PC-3 (cell line): ENCODE measurements at regions of chr18 and their contacts with region 1.

Region 1: DNA sequence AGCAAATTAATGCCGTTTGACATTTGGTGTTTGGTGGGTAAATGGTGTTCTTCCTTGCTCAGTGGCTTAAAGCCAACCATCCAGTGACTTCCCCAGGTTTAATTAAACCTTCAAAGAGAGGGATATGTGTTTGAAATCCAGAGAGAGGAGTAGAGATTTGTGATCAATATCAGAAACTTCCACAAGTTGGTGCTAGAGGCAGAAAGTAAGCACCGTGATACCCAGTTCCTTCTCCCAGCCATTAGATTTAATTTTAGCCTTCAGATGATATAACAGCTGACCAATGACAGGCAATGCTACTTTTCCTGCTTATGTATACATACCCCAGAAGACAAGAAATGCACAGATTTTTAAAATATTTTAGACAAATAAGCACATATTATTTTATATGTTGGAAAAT is 398.5 kb downstream of the CDH2 start:
- DNase-seq: peak; percentile 52
- ATAC-seq: peak; percentile 64
- H3K4me3 ChIP-seq: no peak overlapping the region
- H3K27ac ChIP-seq: no peak overlapping the region
- H3K4me1 ChIP-seq: no peaks in the 10 kb centered on the region
- H3K27me3 ChIP-seq: no peaks in the 10 kb centered on the region
- CTCF ChIP-seq: peak; percentile 73

Region 2: DNA sequence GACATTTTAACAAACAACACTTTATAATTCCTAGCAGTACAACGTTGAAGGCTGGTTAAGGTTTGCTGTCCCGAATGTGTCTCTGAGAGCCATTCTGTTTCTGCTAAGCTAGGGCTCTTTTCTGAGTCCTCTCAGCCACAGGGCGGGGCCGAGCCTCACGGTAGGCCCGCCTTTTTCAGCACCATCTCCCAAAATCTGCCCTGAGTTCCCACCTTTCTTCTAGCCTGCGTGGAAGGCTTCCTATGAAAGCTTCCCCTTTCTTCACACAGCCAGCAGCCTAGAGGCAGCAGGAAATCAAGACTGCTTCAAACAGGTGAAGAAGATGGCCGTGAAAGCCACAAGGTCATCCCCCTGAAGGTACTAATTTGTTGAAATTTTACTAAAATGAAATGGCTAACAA is 143.0 kb after region 1 on chr18:
- CTCF ChIA-PET with region 1: no interaction called
- POLR2A ChIA-PET with region 1: no interaction called
- intact Hi-C with region 1: no loop called
- DNase-seq: peak; percentile 39
- ATAC-seq: peak; percentile 21
- H3K4me3 ChIP-seq: peak overlapping the region; percentile 66
- H3K27ac ChIP-seq: peak overlapping the region; percentile 83
- H3K4me1 ChIP-seq: peaks cover 25% of the 10 kb centered on the region
- H3K27me3 ChIP-seq: no peaks in the 10 kb centered on the region
- CTCF ChIP-seq: no peak

Region 3: DNA sequence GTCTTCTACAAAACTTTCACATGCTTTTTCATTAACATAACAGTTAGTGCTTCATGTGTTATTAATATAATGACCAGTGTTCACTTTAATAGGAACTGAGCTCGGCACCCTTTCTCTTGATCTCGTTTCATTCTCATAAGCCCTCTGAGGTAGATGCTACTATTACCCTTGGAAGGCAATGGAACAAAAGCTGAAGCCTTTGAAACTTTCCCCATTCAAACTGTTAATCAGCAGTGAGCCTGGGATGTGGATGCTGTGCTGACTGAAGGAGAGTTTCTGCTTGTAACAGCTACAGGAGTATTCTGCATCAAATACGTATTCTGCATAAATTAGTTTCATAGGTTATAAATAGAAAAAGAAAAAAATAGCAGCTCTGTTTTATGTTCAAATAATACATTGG is 1302.5 kb after region 1 on chr18:
- CTCF ChIA-PET with region 1: no interaction called
- POLR2A ChIA-PET with region 1: interaction called, 19 read pairs
- intact Hi-C with region 1: no loop called
- DNase-seq: no peak
- ATAC-seq: no peak
- H3K4me3 ChIP-seq: no peak overlapping the region
- H3K27ac ChIP-seq: no peak overlapping the region
- H3K4me1 ChIP-seq: no peaks in the 10 kb centered on the region
- H3K27me3 ChIP-seq: no peaks in the 10 kb centered on the region
- CTCF ChIP-seq: no peak